Activated CD8-positive, alpha-beta T cell treated with anti-CD3 and anti-CD28 coated beads, Interleukin-2, amount 10 ng/mL, durations not matched to agents 7 days and 5 days (primary cell): ENCODE measurements at regions of chr10 and their contacts with region 1.

Region 1: GRCh38 chr10:72337020-72337629 is 17.6 kb downstream of the DNAJB12 start:
- DNase-seq: peak; percentile 75
- ATAC-seq: no peak
- H3K4me3 Mint-ChIP-seq: no peak overlapping the region
- H3K27ac Mint-ChIP-seq: peak overlapping the region; percentile 22
- H3K4me1 Mint-ChIP-seq: peaks cover 71% of the 10 kb centered on the region
- H3K27me3 Mint-ChIP-seq: no peaks in the 10 kb centered on the region

Region 2: DNA sequence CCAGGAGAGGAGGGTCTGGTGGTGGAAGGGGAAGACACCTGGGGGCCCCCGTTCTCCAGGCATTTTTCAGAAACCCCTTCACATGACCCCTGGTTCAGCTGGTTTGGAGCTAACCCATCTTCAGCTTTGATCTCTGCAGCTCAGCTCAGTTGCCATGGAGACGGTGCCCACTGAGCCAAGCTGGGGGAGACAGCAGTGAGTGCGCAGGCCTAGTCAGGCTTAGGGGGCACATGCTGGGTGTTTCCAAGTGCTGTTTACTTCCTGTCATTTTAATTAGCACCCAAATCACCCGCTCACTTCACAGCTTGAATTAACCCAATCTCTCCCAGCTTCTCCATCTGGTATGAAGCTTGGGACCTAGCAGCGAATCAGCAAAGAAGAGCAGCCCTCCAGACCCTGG is 257.8 kb before region 1 on chr10:
- CTCF ChIA-PET with region 1: interaction called, 11 read pairs
- POLR2A ChIA-PET with region 1: no interaction called
- DNase-seq: peak; percentile 78
- ATAC-seq: peak; percentile 49
- H3K4me3 Mint-ChIP-seq: peak overlapping the region; percentile 34
- H3K27ac Mint-ChIP-seq: peak overlapping the region; percentile 82
- H3K4me1 Mint-ChIP-seq: peaks cover 91% of the 10 kb centered on the region
- H3K27me3 Mint-ChIP-seq: no peaks in the 10 kb centered on the region

Region 3: DNA sequence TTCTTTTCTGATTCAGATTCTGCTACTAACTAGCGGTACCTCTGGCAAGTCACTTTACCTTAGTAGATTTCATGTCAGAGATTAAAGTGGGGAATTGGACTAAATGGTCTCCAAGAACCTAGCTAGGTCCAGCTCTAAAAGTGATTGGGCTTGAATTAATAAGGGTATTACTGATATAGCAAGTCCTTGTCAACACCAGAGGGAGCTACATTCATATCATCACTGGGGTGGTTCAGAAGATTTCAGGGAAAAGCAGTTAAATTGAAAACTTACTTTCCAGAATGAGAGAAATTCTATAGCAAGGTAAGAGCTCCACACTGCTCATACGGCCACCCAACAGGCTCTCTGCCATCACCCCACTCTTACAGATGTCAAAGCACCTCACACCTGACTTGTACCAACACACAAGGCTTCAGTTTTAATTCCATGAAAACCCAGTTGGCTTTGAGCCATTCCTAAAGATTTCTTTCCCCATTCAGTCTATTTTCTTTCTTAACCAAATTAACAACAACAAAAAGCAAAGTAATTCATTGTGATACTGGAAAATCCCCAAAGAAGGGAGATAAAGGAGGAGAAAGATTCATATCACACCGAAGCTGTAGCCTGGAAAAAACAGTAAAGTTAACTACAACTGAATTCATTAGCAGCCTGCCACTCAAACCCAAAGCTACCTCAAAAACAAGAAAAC is 210.8 kb before region 1 on chr10:
- CTCF ChIA-PET with region 1: interaction called, 65 read pairs
- POLR2A ChIA-PET with region 1: no interaction called
- DNase-seq: no peak
- ATAC-seq: no peak
- H3K4me3 Mint-ChIP-seq: no peak overlapping the region
- H3K27ac Mint-ChIP-seq: no peak overlapping the region
- H3K4me1 Mint-ChIP-seq: peaks cover 25% of the 10 kb centered on the region
- H3K27me3 Mint-ChIP-seq: no peaks in the 10 kb centered on the region

Region 4: DNA sequence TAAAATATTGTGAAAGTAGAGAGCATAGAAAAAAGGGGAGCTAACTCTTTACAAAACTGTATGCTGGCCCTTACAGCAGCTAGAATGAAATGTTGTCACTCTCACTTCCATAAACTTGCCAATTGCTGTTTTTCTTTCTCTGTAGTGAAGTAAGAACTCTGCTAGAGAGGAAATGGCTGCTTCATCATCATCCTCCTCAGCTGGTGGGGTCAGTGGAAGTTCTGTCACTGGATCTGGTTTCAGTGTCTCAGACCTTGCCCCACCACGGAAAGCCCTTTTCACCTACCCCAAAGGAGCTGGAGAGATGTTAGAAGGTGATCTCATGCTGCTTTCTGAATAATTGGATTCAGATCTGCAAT is 113.4 kb before region 1 on chr10:
- CTCF ChIA-PET with region 1: interaction called, 18 read pairs
- POLR2A ChIA-PET with region 1: interaction called, 4 read pairs
- DNase-seq: no peak
- ATAC-seq: peak; percentile 22
- H3K4me3 Mint-ChIP-seq: peak overlapping the region; percentile 24
- H3K27ac Mint-ChIP-seq: peak overlapping the region; percentile 65
- H3K4me1 Mint-ChIP-seq: peaks cover 51% of the 10 kb centered on the region
- H3K27me3 Mint-ChIP-seq: no peaks in the 10 kb centered on the region

Region 5: DNA sequence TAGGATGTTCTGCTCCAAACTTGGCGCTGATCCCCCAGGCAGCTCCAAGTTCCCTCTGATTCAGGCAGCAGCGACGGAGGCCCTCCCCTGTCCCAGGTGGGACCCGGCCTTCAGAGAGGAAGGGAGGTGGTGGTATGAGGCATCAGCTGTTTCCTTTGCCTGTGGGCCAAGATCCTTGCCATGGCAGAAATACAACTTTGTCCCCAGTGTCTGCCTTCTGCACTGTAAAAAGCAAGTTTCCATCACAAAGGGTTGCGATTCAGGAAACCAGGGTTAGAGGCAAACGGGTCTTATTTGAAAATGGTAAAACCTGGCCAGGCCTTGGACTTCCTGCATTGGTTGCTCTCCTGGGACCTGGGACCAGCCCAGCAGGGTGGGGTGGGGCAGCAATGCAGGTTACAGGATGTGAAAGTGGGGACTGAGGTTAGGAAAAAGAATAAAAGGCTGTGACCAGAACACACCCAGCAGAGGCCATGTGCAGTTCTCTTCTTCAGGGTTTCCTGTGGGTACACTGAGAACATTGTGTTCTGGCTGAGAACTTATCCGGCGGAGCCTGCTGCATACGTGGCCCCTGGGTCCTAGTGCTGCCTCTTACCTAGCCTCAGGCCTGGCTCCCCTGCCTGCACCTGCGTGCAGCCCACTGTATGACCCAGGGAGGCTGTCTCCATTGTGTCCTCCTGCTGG is 88.5 kb before region 1 on chr10:
- CTCF ChIA-PET with region 1: interaction called, 26 read pairs
- POLR2A ChIA-PET with region 1: interaction called, 6 read pairs
- DNase-seq: peak; percentile 91
- ATAC-seq: peak; percentile 88
- H3K4me3 Mint-ChIP-seq: peak overlapping the region; percentile 80
- H3K27ac Mint-ChIP-seq: peak overlapping the region; percentile 95
- H3K4me1 Mint-ChIP-seq: peaks cover 85% of the 10 kb centered on the region
- H3K27me3 Mint-ChIP-seq: no peaks in the 10 kb centered on the region

Region 6: GRCh38 chr10:72292223-72292691 is 44.9 kb before region 1 on chr10:
- CTCF ChIA-PET with region 1: interaction called, 23 read pairs
- POLR2A ChIA-PET with region 1: interaction called, 119 read pairs
- DNase-seq: peak; percentile 55
- ATAC-seq: peak; percentile 27
- H3K4me3 Mint-ChIP-seq: peak overlapping the region; percentile 7
- H3K27ac Mint-ChIP-seq: peak overlapping the region; percentile 84
- H3K4me1 Mint-ChIP-seq: peaks cover 64% of the 10 kb centered on the region
- H3K27me3 Mint-ChIP-seq: no peaks in the 10 kb centered on the region